ENCODE measurements at regions of chr12 and their contacts with region 1.

Region 1: DNA sequence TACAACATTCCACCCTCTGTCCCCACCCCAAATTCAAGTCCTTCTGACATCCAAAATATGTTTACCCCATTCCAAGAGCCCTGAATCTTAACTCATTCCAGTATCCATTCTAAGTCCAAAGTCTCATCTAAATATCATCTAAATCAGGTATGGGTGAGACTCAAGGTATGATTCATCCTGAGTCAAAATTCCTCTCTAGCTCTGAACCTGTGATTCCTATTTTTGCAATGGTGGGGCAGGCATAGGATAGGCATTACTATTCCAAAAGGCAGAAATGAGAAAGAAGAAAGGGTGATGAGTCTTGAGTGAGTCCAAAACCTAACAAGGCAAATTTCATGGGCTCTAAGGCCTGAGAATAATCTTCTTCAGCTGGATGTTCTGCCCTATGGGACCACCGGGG is 140.3 kb upstream of the FAR2 start:
- DNase-seq: no peak
- ATAC-seq: no peak
- H3K4me3 ChIP-seq: no peak overlapping the region
- H3K27ac ChIP-seq: no peak overlapping the region
- H3K4me1 ChIP-seq: no peaks in the 10 kb centered on the region
- CTCF ChIP-seq: no peak
- EP300 ChIP-seq: no peak
- POLR2A ChIP-seq: no peak
- RAD21 ChIP-seq: no peak

Region 2: DNA sequence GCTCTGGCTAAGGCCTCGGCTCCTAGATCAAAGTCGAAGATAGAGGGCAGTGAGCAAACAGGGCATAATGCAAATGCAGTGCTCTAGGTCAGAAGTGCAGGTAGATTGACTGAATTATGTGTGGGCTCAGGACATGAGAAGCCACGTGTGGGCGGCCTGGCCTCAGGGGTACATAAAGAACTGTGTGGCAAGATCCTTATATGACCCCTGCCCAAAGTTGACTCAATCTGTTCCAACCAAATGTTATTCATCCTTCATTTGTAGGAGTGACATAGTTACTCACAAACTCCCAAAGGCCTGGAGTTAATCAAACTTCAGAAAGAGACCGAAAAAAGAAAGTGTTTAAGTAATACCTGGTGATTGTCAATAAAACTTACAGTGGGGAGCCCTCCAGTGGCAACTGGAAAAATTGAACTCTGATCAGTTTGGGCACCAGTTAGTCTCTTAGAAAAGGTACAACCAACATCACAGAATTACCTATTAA is 10.1 kb before region 1 on chr12:
- CTCF ChIA-PET with region 1: interaction called, 11 read pairs
- POLR2A ChIA-PET with region 1: no interaction called
- DNase-seq: peak; percentile 10 to 17
- ATAC-seq: peak; percentile 54 to 55; a peak in 3 of 6 replicates
- H3K4me3 ChIP-seq: no peak overlapping the region
- H3K27ac ChIP-seq: no peak overlapping the region
- H3K4me1 ChIP-seq: no peaks in the 10 kb centered on the region
- CTCF ChIP-seq: peak; percentile 45; the same call in 2 of the 3 replicates
- EP300 ChIP-seq: no peak
- POLR2A ChIP-seq: no peak
- RAD21 ChIP-seq: peak; percentile 54 to 56

Measured in A549 (cell line).